Right ventricle myocardium inferior (tissue), 1 donor: ENCODE measurements at regions of chr9 and their contacts with region 1.

Region 1: GRCh38 chr9:125407974-125408900 is 146.6 kb downstream of the GAPVD1 start:
- DNase-seq: peak; percentile 92
- ATAC-seq: peak; percentile 87

Region 2: DNA sequence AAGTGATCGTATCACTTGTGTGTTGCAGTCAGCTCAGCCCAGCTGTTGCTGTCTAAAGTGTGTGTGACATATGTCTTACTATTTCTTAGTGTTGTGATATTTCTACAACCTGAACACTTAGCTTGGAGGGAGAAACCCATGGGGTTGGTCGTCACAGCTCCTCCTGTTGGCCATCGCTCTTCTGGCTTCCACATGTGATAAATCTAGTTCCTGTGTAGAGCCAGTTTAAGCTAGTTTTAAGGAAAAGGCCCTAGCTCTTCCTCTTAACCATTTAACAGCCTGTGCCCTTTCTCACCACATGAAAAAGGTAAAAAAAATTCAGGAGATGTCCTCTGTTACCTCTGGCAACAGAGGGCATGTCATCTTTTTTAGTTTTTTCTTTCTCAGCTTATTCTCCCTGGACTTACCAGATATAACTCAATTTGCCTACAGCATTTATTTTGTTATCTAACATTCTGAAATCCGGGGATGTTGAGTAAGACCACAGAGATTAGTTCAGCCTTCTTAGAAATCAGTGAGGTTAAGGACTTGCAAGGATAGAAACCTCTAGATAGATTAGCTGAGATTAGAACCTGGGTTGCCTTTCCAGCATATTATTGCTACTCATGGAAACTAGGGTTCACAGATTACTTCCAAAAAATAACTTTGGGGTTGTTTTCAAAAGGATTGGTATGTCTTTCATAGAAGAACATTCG is 46.3 kb before region 1 on chr9:
- intact Hi-C with region 1: no loop called
- DNase-seq: no peak
- ATAC-seq: no peak

Region 3: DNA sequence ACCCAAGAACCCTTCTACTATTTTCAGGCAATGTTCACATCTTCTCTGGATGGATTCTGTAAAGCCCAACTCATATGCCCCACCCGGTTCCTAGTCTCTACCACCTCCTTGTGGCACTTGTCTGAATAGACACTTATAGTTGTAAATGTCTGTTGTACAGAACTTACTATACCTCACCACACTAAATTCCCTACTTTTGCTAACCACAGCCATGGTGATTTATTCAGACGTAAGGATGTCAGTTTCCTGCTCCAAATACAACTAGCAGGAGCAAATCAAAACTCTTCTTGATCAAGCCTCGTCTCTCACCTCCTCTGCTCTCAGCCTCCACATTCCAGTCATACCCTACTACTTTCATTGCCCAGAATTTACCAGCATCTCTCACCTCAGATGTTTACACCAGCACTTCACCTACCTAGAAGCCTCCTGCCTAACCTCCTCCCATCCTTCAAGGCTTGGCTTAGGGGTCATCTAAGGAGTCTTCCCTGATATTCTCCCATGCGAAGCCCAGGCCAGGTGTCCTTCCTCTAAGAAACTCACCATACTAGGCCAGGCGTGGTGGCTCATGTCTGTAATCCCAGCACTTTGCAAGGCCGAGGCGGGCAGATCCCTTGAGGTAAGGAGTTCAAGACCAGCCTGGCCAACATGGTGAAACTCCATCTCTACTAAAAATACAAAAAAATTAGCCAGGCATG is 223.3 kb after region 1 on chr9:
- intact Hi-C with region 1: loop called (anchors 2 kb)
- DNase-seq: no peak
- ATAC-seq: peak; percentile 65

Region 4: DNA sequence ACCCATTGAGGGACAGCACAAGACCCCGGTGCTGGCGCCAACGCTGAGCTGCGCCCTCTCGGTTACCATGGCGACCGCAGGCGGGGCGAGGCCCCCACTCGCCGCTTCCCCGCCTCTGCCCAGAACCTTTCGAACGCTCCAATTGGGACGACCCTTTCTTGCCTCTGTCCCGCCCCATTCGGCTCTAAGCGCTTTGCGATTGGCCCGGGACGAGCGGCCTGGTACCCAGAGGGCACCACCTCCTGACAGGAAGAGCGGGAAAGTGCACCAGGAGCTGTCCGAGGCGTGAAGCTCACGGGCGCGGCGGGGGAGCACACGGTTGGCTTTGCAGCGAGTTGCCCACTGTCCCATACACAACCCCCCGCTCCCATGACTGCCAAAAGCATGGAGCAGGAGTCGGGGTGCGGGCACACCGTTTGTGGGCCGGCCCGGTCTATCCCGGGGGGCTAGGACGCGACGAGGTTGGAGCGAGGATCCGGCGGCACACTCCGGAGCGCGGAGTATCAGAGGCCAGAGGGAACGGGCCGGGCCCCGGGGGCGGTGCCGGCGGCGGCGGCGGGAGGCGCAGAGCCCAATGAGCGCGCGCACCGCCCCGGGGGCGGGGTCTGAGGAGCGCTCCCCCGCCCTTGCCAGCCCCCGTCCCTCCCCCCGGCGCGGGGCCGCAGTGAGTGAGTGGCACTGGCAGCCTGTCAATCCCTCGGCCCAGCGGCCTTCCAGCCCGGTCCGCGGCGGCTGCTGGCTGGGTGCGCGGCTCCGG is 338.0 kb after region 1 on chr9:
- intact Hi-C with region 1: loop called (anchors 5 kb)
- DNase-seq: peak; percentile 98
- ATAC-seq: peak; percentile 96

Region 5: DNA sequence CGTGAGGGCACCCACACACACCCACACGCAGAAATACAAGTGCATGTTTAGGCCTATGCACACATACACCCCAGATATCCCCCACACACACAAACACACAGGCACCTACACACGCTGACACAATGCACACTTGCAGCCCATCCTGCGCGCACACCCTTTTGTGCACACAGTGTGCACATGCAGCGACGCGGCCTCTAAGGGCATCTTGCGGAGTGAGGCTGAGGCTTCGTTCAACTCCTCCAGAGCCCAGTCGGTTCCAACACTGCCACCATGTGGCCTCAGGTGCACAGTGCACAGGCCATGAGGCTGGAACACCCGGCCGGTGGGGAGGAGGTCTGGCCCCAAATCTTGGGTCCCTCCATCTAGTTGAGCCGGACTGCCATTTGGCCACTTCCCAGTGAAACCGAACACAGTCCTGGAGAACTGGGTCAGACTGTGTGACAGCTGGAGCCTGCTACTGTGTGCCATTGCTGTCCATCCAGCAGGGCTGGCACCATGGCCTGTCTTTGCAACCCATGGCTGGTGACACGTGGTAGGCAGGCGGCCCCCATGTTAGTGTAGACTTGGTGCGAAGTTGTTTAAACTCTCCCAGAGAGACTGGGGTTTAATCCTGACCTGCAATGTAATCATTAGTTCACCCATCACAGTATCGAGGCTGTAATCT is 820.7 kb after region 1 on chr9:
- intact Hi-C with region 1: loop called (anchors 1 kb)
- DNase-seq: peak; percentile 84
- ATAC-seq: peak; percentile 82

Region 6: DNA sequence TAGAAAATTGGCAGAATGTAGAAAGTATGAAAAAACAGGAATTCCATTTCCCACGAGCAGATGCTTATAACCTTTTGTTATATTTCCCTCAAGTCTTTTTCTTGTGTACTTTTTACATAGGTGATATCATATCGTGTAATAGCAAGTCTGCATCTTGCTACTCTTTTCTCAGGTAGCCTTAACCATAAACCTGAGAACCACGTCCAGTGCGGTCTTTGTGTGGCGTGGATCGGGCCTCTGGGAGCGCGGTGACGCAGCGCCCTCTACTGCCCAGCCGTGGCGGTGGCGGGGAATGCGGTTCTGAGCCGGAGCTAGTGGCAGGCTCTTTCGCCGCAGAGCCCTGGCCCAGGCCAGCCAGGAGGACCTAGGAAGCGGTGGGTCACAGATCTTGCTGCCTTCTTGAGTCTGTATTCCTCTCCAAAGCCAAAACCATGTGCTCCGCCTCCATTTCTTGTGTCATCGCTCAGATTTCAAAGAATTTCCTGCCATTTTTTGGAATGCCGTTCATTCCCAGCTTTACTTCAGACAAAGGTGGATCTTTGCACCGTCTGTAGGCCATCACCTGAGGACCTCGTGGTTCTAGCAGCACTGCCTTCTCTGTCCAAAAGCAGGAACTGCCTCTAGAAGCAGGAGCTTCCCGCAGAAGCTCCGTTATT is 990.3 kb after region 1 on chr9:
- intact Hi-C with region 1: loop called (anchors 5 kb)
- DNase-seq: peak; percentile 93
- ATAC-seq: peak; percentile 89

Region 7: DNA sequence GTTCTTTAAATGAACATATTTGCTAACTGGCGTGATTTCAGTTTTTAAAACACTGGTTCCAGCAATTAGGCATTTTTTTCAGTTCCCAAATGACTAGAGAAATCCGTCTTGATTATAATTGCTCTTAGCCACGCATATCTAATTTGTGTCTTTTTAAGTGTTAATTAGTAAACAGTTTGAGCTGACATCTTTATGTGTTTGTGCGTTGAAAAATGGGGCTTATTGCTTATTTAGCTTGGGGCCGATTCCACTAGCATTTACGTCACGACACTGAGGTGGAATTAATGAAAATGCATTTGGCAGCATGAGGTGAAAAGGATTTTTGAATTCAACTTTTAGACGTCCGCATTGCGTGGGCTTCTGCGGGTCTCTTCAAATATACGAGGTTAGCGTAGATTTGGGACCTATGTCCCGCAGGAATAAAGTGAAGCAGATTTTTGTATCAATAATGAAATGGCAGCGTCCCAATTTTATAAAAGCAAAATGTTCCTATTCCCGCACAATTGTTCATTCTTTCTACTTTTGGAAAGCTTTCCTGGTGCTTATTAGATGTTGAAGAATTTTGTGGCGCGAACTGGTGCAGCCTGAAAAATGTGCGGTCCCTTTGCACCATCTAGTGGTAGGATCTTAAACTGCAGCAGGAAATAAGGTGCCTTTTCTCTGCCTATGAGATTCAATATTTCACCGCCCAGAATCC is 1082.8 kb after region 1 on chr9:
- intact Hi-C with region 1: loop called (anchors 10 kb)
- DNase-seq: no peak
- ATAC-seq: peak; percentile 61